ENCODE measurements at regions of chr1 and their contacts with region 1.

Region 1: DNA sequence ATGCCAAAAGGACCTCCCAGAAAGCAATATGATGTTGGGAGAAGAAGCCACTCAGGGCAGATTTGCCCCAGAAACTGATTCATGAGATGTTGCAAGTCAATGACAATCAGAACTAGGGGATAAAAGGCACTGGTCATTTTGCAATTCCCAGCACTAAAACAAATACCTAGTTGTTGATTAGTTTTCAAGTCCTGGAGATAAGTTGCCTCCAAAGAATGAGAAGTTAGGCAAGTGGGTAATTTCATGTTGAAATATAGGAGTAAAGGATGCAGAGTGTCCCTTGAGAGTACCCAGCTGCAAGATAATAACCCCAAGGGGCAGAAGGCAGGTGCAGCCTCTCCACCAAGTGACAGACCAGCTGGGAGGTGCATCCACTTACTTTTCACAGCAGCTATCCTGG is 363.6 kb downstream of the PBX1 start:
- DNase-seq: no peak
- ATAC-seq: peak in 2 of 8 donors; percentile 46 to 49
- H3K4me3 ChIP-seq: no peak overlapping the region
- H3K27ac ChIP-seq: no peak overlapping the region
- H3K4me1 ChIP-seq: peaks cover 0 to 8% (median 0%) of the 10 kb centered on the region in 9 donors
- H3K27me3 ChIP-seq: no peaks in the 10 kb centered on the region
- CTCF ChIP-seq: no peak

Region 2: DNA sequence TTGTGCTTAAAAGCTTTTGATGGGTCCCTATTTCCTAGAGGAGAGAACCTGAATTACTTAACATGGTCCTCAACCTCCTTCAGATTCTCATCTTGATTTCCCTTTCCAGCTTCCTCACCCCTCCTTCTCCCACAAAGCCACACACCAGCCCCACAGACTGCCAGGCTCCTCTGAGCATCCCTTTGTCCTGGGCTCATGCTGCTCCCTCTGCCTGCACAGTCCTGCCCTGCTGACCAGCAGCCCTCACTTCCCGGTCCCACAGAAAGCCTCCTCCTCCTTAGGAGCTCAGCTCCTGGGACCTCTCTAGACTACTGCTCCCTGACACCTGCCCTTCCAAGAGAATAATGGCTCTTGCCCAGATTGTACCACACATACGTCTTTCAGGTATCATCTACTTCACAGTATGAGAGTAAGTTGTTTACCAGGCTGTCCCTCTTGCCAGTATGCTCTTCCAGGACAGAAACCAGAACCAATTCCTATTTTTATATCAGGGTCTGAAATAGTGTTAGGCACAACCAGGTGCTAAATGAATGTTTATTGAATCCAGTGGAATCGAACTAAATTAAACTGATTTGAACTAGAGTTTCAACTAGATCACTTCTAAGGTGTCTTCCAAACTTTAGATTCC is 60.6 kb after region 1 on chr1:
- intact Hi-C with region 1: loop called in 1 of 10 experiments (anchors 10 kb)
- DNase-seq: no peak
- ATAC-seq: peak in 1 of 8 donors; percentile 57
- H3K4me3 ChIP-seq: no peak overlapping the region
- H3K27ac ChIP-seq: no peak overlapping the region
- H3K4me1 ChIP-seq: no peaks in the 10 kb centered on the region
- H3K27me3 ChIP-seq: no peaks in the 10 kb centered on the region
- CTCF ChIP-seq: no peak